B cell (primary cell): ENCODE measurements at regions of chr9 and their contacts with region 1.

Region 1: DNA sequence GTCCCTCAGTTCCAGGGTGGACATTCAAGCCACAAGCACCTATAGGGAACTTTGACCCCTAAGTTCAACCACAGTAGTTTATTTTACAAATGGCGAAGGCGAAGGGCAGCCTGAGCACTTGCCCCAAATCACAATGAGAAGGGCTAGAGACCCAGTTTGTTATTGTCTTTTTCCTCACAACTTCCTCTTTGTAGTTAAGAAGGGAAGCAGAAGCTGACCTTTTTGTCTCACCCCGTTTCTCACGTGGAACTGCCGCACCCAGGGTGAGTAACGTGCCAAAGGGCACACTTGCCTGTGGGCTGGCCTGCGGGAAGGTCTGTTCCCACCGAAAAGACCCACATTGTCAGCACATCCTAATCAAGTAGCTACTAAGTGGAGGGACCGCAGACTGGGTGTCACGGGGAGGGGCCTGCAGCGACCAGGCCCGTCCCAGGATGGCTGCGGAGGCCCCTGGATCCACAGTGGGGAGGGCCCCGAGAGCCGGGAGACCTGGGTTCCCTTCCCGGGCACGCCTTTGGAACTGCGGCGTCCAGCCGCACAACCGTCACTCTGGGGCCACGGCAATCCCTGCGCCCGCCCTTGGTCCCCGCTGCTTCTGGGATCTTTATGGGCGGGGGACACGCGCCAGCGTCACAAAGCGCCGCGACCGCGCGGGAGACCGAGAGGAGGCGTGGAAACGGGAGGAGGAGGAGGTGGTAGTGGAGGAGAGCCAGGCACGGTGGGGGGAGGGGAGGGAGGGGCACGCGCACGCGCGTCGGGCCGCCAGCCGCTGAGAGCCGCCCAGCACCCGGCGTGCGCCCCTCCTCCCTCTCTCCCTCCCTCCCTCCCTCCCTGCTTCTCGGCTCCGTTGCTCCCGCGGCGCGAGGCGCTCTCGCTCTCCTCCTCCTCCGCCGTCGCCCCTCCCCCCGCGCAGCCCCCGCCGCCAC is at the start of gene UBE2R2:
- DNase-seq: peak; percentile 97
- ATAC-seq: peak; percentile 73
- H3K4me3 ChIP-seq: peak within 1 kb of the TSS; percentile 68 to 85 (median 78)
- H3K4me3 Mint-ChIP-seq: peak within 1 kb of the TSS; percentile 98
- H3K27ac ChIP-seq: peak within 1 kb of the TSS; percentile 99
- H3K27ac Mint-ChIP-seq: peak within 1 kb of the TSS; percentile 100
- H3K4me1 ChIP-seq: peaks cover 46 to 52% of the 10 kb centered on the region in 2 donors
- H3K4me1 Mint-ChIP-seq: peaks cover 64% of the 10 kb centered on the region
- H3K27me3 ChIP-seq: no peaks in the 10 kb centered on the region
- H3K27me3 Mint-ChIP-seq: no peaks in the 10 kb centered on the region
- CTCF ChIP-seq: no peak
- total RNA-seq, gene UBE2R2: 46.0 and 48.8 TPM in 2 replicates

Region 2: GRCh38 chr9:33024966-33025571 is 791.5 kb before region 1 on chr9 and contains the start of gene DNAJA1:
- CTCF ChIA-PET with region 1: no interaction called
- POLR2A ChIA-PET with region 1: no interaction called
- intact Hi-C with region 1: loop called (anchors 10 kb)
- DNase-seq: peak; percentile 96
- ATAC-seq: peak; percentile 83
- H3K4me3 ChIP-seq: peak within 1 kb of the TSS; percentile 74 to 100 (median 100)
- H3K4me3 Mint-ChIP-seq: peak within 1 kb of the TSS; percentile 97
- H3K27ac ChIP-seq: peak within 1 kb of the TSS; percentile 99
- H3K27ac Mint-ChIP-seq: peak within 1 kb of the TSS; percentile 95
- H3K4me1 ChIP-seq: peaks cover 17 to 34% of the 10 kb centered on the region in 2 donors
- H3K4me1 Mint-ChIP-seq: peaks cover 59% of the 10 kb centered on the region
- H3K27me3 ChIP-seq: no peaks in the 10 kb centered on the region
- H3K27me3 Mint-ChIP-seq: no peaks in the 10 kb centered on the region
- CTCF ChIP-seq: no peak
- total RNA-seq, gene DNAJA1: 66.6 and 68.6 TPM in 2 replicates

Region 3: GRCh38 chr9:33721674-33722358 is 94.8 kb before region 1 on chr9:
- CTCF ChIA-PET with region 1: no interaction called
- POLR2A ChIA-PET with region 1: no interaction called
- intact Hi-C with region 1: no loop called
- DNase-seq: peak; percentile 86
- ATAC-seq: peak; percentile 82
- H3K4me3 ChIP-seq: no peak overlapping the region
- H3K4me3 Mint-ChIP-seq: no peak overlapping the region
- H3K27ac ChIP-seq: no peak overlapping the region
- H3K27ac Mint-ChIP-seq: no peak overlapping the region
- H3K4me1 ChIP-seq: peaks cover 0 to 10% of the 10 kb centered on the region in 2 donors
- H3K4me1 Mint-ChIP-seq: peaks cover 3% of the 10 kb centered on the region
- H3K27me3 ChIP-seq: peaks cover 0 to 7% (median 0%) of the 10 kb centered on the region in 4 experiments
- H3K27me3 Mint-ChIP-seq: peaks cover 27% of the 10 kb centered on the region
- CTCF ChIP-seq: peak; percentile 100

Region 4: GRCh38 chr9:33843312-33843961 is 26.8 kb after region 1 on chr9:
- CTCF ChIA-PET with region 1: interaction called, 179 read pairs
- POLR2A ChIA-PET with region 1: no interaction called
- intact Hi-C with region 1: no loop called
- DNase-seq: no peak
- ATAC-seq: no peak
- H3K4me3 ChIP-seq: no peak overlapping the region
- H3K4me3 Mint-ChIP-seq: no peak overlapping the region
- H3K27ac ChIP-seq: peak overlapping the region in 1 of 2 donors; percentile 63
- H3K27ac Mint-ChIP-seq: peak overlapping the region; percentile 61
- H3K4me1 ChIP-seq: peaks cover 20 to 22% of the 10 kb centered on the region in 2 donors
- H3K4me1 Mint-ChIP-seq: peaks cover 56% of the 10 kb centered on the region
- H3K27me3 ChIP-seq: no peaks in the 10 kb centered on the region
- H3K27me3 Mint-ChIP-seq: no peaks in the 10 kb centered on the region
- CTCF ChIP-seq: no peak

Region 5: GRCh38 chr9:33988219-33988890 is 171.8 kb after region 1 on chr9:
- CTCF ChIA-PET with region 1: no interaction called
- POLR2A ChIA-PET with region 1: interaction called, 19 read pairs
- intact Hi-C with region 1: no loop called
- DNase-seq: no peak
- ATAC-seq: no peak
- H3K4me3 ChIP-seq: no peak overlapping the region
- H3K4me3 Mint-ChIP-seq: no peak overlapping the region
- H3K27ac ChIP-seq: no peak overlapping the region
- H3K27ac Mint-ChIP-seq: no peak overlapping the region
- H3K4me1 ChIP-seq: no peaks in the 10 kb centered on the region
- H3K4me1 Mint-ChIP-seq: peaks cover 4% of the 10 kb centered on the region
- H3K27me3 ChIP-seq: no peaks in the 10 kb centered on the region
- H3K27me3 Mint-ChIP-seq: no peaks in the 10 kb centered on the region
- CTCF ChIP-seq: no peak

Region 6: DNA sequence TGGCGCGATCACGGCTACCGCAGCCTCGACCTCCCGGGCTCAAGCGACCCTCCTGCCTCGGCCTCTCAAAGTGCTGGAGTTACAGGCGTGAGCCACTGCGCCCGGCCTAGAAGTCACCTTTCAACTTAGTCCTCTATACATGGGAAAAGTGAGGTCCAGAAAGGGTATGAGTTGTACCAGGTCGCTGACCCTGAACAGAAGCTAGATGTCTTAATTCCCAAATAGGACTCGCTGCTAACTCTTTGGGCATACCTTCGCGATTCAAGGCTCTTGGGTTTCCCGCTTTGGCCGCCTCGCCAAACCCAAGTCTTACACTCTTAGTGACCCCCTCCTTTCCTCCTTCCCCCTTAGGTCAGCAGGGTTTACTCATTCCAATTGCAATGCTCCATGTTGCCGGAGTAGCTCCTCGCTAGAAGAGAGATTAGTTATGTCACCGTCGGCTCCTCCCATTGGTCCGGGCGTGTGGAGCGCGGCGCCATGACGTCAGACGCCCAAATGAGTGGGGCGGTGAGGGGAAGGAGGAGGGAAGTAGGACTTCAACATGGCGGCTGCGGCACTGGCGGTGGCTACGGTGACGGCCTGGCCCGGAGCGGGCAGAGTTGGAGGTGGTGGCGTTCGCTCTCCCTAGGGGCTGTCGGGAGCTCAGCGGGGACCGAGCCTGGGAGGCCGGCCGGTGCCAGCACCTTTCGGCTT is 362.1 kb after region 1 on chr9 and contains the start of gene UBAP1:
- CTCF ChIA-PET with region 1: no interaction called
- POLR2A ChIA-PET with region 1: no interaction called
- intact Hi-C with region 1: loop called (anchors 5 kb)
- DNase-seq: peak; percentile 95
- ATAC-seq: peak; percentile 99
- H3K4me3 ChIP-seq: peak within 1 kb of the TSS; percentile 68 to 94 (median 75)
- H3K4me3 Mint-ChIP-seq: peak within 1 kb of the TSS; percentile 92
- H3K27ac ChIP-seq: peak within 1 kb of the TSS; percentile 84 to 88
- H3K27ac Mint-ChIP-seq: peak within 1 kb of the TSS; percentile 93
- H3K4me1 ChIP-seq: peaks cover 8 to 21% of the 10 kb centered on the region in 2 donors
- H3K4me1 Mint-ChIP-seq: peaks cover 18% of the 10 kb centered on the region
- H3K27me3 ChIP-seq: peaks cover 0 to 17% (median 2%) of the 10 kb centered on the region in 4 experiments
- H3K27me3 Mint-ChIP-seq: no peaks in the 10 kb centered on the region
- CTCF ChIP-seq: no peak
- total RNA-seq, gene UBAP1: 27.0 and 29.3 TPM in 2 replicates

Region 7: GRCh38 chr9:34458013-34458958 is 641.7 kb after region 1 on chr9 and contains the starts of genes DNAI1 and FAM219A:
- CTCF ChIA-PET with region 1: no interaction called
- POLR2A ChIA-PET with region 1: no interaction called
- intact Hi-C with region 1: loop called (anchors 10 kb)
- DNase-seq: peak; percentile 99
- ATAC-seq: peak; percentile 96
- H3K4me3 ChIP-seq: peak within 1 kb of the TSS; percentile 32 to 76 (median 58)
- H3K4me3 Mint-ChIP-seq: peak within 1 kb of the TSS; percentile 96
- H3K27ac ChIP-seq: no peak within 1 kb of the TSS
- H3K27ac Mint-ChIP-seq: peak within 1 kb of the TSS; percentile 86
- H3K4me1 ChIP-seq: peaks cover 14 to 24% of the 10 kb centered on the region in 2 donors
- H3K4me1 Mint-ChIP-seq: peaks cover 35% of the 10 kb centered on the region
- H3K27me3 ChIP-seq: peaks cover 0 to 9% (median 4%) of the 10 kb centered on the region in 4 experiments
- H3K27me3 Mint-ChIP-seq: peaks cover 14% of the 10 kb centered on the region
- CTCF ChIP-seq: no peak
- total RNA-seq, gene DNAI1: not detected in 2 replicates
- total RNA-seq, gene FAM219A: 16.0 and 17.3 TPM in 2 replicates